ENCODE measurements at regions of chr17 and their contacts with region 1.

Region 1: GRCh38 chr17:76278952-76279741 is 14.0 kb downstream of the UBALD2 start:
- DNase-seq: peak; percentile 84
- ATAC-seq: peak; percentile 56
- H3K4me3 Mint-ChIP-seq: no peak overlapping the region
- H3K27ac Mint-ChIP-seq: no peak overlapping the region
- H3K4me1 Mint-ChIP-seq: peaks cover 35% of the 10 kb centered on the region
- H3K27me3 Mint-ChIP-seq: no peaks in the 10 kb centered on the region
- CTCF ChIP-seq: peak; percentile 83

Region 2: GRCh38 chr17:75679706-75680442 is 599.3 kb before region 1 on chr17:
- CTCF ChIA-PET with region 1: no interaction called
- POLR2A ChIA-PET with region 1: no interaction called
- intact Hi-C with region 1: no loop called
- DNase-seq: no peak
- ATAC-seq: no peak
- H3K4me3 Mint-ChIP-seq: no peak overlapping the region
- H3K27ac Mint-ChIP-seq: peak overlapping the region; percentile 72
- H3K4me1 Mint-ChIP-seq: peaks cover 37% of the 10 kb centered on the region
- H3K27me3 Mint-ChIP-seq: no peaks in the 10 kb centered on the region
- CTCF ChIP-seq: no peak

Region 3: DNA sequence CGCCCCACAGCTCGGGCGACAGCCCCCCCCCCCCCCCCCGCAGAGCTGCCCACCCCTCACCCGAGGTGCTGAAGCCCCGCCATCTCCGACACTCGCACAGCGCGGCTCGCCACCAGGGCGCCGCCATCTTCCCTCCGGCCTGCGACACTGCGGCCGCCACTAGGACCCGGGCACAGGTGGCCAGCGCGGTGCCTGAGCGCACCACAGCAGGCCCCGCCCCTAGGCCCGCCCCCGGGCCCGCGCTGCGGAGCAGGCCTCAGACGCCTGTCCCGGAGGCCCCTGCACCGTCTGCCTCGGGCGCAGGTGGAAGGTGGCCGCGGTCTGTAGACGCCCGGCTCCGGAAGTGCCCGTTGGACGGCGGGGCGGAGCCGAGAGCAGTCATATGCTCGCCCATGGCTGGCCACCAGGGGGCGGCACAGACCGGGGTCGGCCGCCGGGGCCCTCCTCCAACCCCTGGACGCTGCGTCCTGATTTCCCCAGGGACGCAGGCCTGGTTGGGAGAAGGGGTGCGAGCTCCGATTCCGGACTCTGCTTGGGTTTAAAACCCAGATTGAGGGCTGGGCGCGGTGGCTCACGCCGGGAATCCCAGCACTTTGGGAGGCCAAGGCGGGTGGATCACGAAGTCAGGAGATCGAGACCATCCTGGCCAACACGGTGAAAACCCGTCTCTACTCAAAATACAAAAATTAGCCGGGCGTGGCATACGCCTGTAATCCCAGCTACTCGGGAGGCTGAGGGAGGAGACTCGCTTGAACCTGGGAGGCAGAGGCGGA is 374.2 kb before region 1 on chr17 and contains the start of gene MRPL38:
- CTCF ChIA-PET with region 1: no interaction called
- POLR2A ChIA-PET with region 1: interaction called, 3 read pairs
- intact Hi-C with region 1: loop called (anchors 10 kb)
- DNase-seq: peak; percentile 97
- ATAC-seq: peak; percentile 97
- H3K4me3 Mint-ChIP-seq: peak within 1 kb of the TSS; percentile 90
- H3K27ac Mint-ChIP-seq: peak within 1 kb of the TSS; percentile 92
- H3K4me1 Mint-ChIP-seq: peaks cover 11% of the 10 kb centered on the region
- H3K27me3 Mint-ChIP-seq: no peaks in the 10 kb centered on the region
- CTCF ChIP-seq: peak; percentile 61
- total RNA-seq, gene MRPL38: 132 and 137 TPM in 2 replicates

Region 4: DNA sequence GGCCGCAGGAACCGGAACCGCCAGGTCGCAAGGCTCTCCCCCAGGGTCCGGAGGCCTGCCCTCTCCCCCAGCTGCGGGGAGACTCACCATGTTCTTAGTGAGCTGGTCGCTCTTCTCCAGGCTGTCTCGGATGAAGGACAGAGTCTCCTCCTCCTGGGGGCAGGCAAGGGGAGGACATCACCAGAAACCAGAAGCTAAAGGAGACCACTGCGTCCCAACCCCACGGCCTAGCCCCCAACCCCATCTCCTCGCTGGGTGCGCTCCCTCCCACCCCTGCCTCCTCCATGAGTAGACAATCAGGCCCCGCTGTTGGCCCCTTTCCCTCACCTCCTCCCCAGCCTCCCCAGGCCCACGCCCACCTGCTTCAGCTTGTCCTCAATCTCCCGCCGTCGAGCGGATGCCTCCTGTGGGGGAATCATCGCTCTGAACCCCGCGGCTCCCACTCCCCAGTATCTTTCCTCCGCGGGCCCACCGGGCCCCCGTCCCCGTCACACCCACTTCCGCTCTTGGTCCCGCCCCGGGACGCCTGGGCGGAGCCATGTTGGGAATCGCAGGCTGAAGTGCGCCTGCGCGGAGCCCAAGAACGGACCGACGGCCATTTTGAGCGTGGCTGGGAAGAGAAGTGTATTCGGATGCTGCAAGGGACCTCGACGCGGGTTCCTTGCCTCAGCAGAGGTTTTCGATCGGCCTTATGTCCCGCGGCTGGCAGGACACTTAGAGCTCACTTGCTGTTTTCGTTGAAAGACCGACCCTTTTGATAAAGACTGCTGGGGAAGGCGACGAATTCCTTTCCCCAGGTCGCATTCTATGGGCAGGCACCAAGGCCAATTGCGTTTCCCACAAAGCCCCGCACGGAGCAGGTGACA is 175.6 kb before region 1 on chr17 and contains the start of gene EXOC7:
- CTCF ChIA-PET with region 1: interaction called, 12 read pairs
- POLR2A ChIA-PET with region 1: interaction called, 4 read pairs
- intact Hi-C with region 1: no loop called
- DNase-seq: peak; percentile 95
- ATAC-seq: peak; percentile 97
- H3K4me3 Mint-ChIP-seq: peak within 1 kb of the TSS; percentile 98
- H3K27ac Mint-ChIP-seq: peak within 1 kb of the TSS; percentile 91
- H3K4me1 Mint-ChIP-seq: peaks cover 20% of the 10 kb centered on the region
- H3K27me3 Mint-ChIP-seq: no peaks in the 10 kb centered on the region
- CTCF ChIP-seq: no peak
- total RNA-seq, gene EXOC7: 133 and 146 TPM in 2 replicates

Region 5: GRCh38 chr17:76141212-76142038 is 137.7 kb before region 1 on chr17 and contains the start of gene FOXJ1:
- CTCF ChIA-PET with region 1: interaction called, 14 read pairs
- POLR2A ChIA-PET with region 1: interaction called, 4 read pairs
- intact Hi-C with region 1: loop called (anchors 1 kb)
- DNase-seq: peak; percentile 91
- ATAC-seq: peak; percentile 75
- H3K4me3 Mint-ChIP-seq: peak within 1 kb of the TSS; percentile 80
- H3K27ac Mint-ChIP-seq: peak within 1 kb of the TSS; percentile 61
- H3K4me1 Mint-ChIP-seq: peaks cover 60% of the 10 kb centered on the region
- H3K27me3 Mint-ChIP-seq: peaks cover 10% of the 10 kb centered on the region
- CTCF ChIP-seq: no peak
- total RNA-seq, gene FOXJ1: 0.39 and 0.44 TPM in 2 replicates

Region 6: GRCh38 chr17:76246080-76247066 is 32.8 kb before region 1 on chr17:
- CTCF ChIA-PET with region 1: interaction called, 12 read pairs
- POLR2A ChIA-PET with region 1: interaction called, 135 read pairs
- intact Hi-C with region 1: no loop called
- DNase-seq: no peak
- ATAC-seq: peak; percentile 98
- H3K4me3 Mint-ChIP-seq: peak overlapping the region; percentile 56
- H3K27ac Mint-ChIP-seq: peak overlapping the region; percentile 73
- H3K4me1 Mint-ChIP-seq: peaks cover 24% of the 10 kb centered on the region
- H3K27me3 Mint-ChIP-seq: peaks cover 28% of the 10 kb centered on the region
- CTCF ChIP-seq: no peak

Region 7: DNA sequence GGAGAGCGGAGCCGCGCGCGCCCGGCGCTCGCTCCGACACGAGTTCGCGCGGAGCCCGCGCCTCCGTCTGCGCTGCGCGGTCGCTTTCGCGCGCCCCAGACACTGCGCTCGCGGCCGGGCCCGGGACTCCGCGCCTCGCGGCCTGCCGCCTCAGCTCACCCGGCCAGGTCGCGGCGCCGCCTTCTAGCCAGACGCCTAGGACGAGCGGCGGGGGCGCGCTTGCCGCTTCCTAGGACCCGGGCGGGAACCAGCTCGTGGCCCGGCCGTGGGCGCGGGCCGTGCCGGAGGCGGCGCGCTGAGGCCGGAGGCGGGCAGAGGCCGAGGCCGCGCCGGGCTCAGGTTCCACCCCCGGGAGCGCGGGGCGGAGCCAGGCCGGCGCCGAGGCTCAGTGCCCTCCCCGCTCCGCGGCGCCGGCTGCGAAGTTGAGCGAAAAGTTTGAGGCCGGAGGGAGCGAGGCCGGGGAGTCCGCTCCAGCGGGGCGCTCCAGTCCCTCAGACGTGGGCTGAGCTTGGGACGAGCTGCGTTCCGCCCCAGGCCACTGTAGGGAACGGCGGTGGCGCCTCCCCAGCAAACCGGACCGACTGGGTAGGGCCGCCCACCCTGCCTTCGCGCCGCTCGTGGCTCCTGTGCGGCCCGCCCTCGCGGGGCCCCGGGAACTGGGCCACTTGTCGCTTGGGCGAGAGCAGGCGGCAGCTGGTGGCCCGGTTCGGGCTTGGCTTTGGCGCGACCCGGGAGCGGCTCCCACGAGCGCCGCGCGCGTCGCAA is 105.3 kb after region 1 on chr17 and contains the start of gene SPHK1:
- CTCF ChIA-PET with region 1: no interaction called
- POLR2A ChIA-PET with region 1: no interaction called
- intact Hi-C with region 1: no loop called
- DNase-seq: peak; percentile 77
- ATAC-seq: peak; percentile 75
- H3K4me3 Mint-ChIP-seq: peak within 1 kb of the TSS; percentile 86
- H3K27ac Mint-ChIP-seq: peak within 1 kb of the TSS; percentile 71
- H3K4me1 Mint-ChIP-seq: peaks cover 15% of the 10 kb centered on the region
- H3K27me3 Mint-ChIP-seq: peaks cover 2% of the 10 kb centered on the region
- CTCF ChIP-seq: no peak
- total RNA-seq, gene SPHK1: 1.1 and 1.3 TPM in 2 replicates

Measured in activated B cell treated with CpG ODN at 0.5 μM for 24 hours (primary cell).